WTC11 (cell line): ENCODE measurements at regions of chr12 and their contacts with region 1.

Region 1: DNA sequence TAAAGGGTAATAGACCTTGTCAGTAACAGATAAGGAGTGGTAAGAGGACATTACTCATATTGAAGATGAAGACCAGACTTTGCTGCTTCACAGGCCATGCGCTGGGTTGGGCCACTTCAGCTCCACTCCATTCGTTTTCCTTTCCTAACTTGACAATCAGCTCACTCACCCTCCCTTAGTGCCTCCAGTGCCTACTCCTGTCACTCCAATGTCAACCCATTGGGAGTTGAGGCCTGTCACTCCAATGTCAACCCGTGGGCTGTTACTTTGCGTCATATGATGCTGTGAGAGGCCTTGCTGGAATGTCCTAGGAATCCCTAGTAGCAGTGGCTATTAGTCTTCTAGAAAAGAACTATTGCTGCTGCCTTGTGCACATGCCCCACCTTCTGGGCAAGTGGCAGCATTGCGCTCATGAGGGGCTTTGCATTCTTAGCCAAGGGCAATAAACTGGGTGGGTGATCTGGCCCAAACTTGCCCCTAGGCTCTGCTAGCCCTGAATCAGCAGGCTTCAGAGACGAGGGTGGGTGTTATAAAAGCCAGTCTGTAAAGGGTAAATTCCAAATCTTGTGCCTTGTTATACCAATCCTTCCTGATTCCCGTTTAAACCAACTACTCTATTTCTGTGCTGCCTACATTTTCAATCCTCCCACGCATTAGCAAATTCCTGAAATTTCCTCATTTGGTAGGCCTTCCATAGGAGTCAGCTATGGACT is 36.1 kb downstream of the BAZ2A start:
- DNase-seq: peak; percentile 83
- ATAC-seq: peak; percentile 83
- H3K4me3 Mint-ChIP-seq: no peak overlapping the region
- H3K27ac Mint-ChIP-seq: peak overlapping the region; percentile 97
- H3K4me1 Mint-ChIP-seq: peaks cover 35% of the 10 kb centered on the region
- H3K27me3 Mint-ChIP-seq: no peaks in the 10 kb centered on the region
- CTCF ChIP-seq: peak; percentile 63; the same call in 1 of the 2 replicates

Region 2: GRCh38 chr12:56510786-56511185 is 83.3 kb before region 1 on chr12:
- CTCF ChIA-PET with region 1: interaction called, 83 read pairs
- POLR2A ChIA-PET with region 1: interaction called, 5 read pairs
- DNase-seq: no peak
- ATAC-seq: no peak
- H3K4me3 Mint-ChIP-seq: no peak overlapping the region
- H3K27ac Mint-ChIP-seq: no peak overlapping the region
- H3K4me1 Mint-ChIP-seq: no peaks in the 10 kb centered on the region
- H3K27me3 Mint-ChIP-seq: peaks cover 8% of the 10 kb centered on the region
- CTCF ChIP-seq: no peak

Region 3: GRCh38 chr12:56571126-56571525 is 22.9 kb before region 1 on chr12:
- CTCF ChIA-PET with region 1: interaction called, 13 read pairs
- POLR2A ChIA-PET with region 1: no interaction called
- DNase-seq: no peak
- ATAC-seq: peak; percentile 38; the same call in 1 of the 2 replicates
- H3K4me3 Mint-ChIP-seq: no peak overlapping the region
- H3K27ac Mint-ChIP-seq: no peak overlapping the region
- H3K4me1 Mint-ChIP-seq: peaks cover 2% of the 10 kb centered on the region; the same call in 1 of the 2 replicates
- H3K27me3 Mint-ChIP-seq: no peaks in the 10 kb centered on the region
- CTCF ChIP-seq: no peak